Activated naive CD4-positive, alpha-beta T cell treated with anti-CD3 and anti-CD28 coated beads for 36 hours (primary cell): ENCODE measurements at regions of chr12 and their contacts with region 1.

Region 1: GRCh38 chr12:53180220-53180930 is at the starts of genes CSAD and ZNF740:
- DNase-seq: peak; percentile 98
- H3K4me3 Mint-ChIP-seq: peak within 1 kb of the TSS; percentile 87
- H3K27ac Mint-ChIP-seq: peak within 1 kb of the TSS; percentile 96
- H3K4me1 Mint-ChIP-seq: peaks cover 51% of the 10 kb centered on the region
- H3K27me3 Mint-ChIP-seq: no peaks in the 10 kb centered on the region
- total RNA-seq, gene CSAD: 31.5 to 32.3 TPM
- total RNA-seq, gene ZNF740: 40.4 to 42.0 TPM

Region 2: DNA sequence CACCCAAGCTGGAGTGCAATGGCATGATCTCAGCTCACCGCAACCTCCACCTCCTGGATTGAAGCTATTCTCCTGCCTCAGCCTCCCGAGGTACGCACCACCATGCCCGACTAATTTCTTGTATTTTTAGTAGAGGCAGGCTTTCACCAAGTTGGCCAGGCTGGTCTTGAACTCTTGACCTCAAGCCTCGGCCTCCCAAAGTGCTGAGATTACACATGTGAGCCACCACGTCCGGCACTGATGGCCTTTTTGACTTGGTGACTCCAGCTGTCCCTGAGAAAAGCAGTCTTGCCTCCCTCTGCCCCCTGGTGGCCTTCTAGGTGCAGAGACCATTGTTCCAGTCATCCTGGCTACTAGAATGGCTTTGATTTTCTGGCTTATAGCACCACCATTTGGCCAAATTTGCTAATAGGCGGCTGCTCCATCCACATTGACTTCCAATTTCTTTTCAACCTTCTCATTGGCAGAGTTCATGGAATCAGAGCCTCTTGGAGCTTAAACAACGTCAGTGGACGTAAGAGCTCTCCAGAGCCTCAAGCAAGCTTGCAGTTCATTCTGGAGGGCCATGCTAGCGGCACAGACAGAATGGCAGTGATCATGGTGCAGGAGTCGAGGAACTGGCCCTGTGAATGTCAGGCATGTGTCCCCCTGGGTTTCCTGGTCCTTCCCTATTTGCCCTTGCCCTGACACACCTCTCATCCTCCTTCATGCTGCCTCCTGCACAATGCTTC is 199.5 kb before region 1 on chr12:
- CTCF ChIA-PET with region 1: no interaction called
- intact Hi-C with region 1: no loop called
- DNase-seq: peak; percentile 92
- H3K4me3 Mint-ChIP-seq: no peak overlapping the region
- H3K27ac Mint-ChIP-seq: no peak overlapping the region
- H3K4me1 Mint-ChIP-seq: no peaks in the 10 kb centered on the region
- H3K27me3 Mint-ChIP-seq: peaks cover 11% of the 10 kb centered on the region

Region 3: DNA sequence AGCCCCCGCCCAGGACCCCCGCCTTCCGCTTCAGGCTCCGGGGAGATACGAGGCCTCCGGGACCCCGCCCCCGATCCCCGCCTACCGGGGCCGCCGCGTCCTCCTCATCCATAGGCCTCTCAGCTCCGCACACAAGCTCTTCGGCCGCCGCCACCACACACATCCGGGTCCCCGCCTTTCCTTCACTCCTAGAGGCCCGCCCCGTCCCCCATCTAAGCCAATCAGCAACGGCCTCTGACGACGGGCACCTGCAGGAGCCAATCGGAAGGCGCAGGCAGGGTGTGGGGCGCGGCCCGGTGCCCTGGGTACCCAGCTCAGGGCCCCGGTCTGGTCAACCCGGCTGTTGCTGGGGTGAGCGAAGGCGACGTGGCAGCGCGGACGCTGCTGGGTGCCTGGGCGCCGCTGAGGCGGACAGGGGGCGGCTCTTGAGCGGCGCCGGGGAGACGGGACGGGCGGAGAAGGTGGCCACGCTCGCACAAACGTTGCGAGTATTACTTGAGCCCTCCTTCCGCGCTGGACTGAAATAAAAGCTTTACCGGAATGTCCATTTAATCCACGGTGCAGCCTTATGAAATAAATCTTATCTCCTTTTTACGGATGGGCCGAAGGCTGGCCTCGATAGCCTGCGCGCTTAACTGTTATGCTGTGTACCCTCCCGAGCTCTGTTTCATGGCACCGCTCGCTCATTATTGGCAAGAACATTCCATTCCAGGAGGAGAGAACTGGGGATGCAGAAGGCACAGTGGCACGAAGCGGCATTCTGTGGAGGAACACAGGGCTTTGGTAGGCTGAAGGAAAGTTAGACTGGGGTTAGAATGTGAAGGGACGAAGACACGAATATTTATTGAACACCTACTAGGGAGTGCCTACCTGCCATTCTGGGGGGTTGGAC is 100.9 kb before region 1 on chr12 and contains the start of gene SPRYD3:
- CTCF ChIA-PET with region 1: no interaction called
- intact Hi-C with region 1: loop called (anchors 1 kb)
- DNase-seq: peak; percentile 98
- H3K4me3 Mint-ChIP-seq: peak within 1 kb of the TSS; percentile 88
- H3K27ac Mint-ChIP-seq: peak within 1 kb of the TSS; percentile 85
- H3K4me1 Mint-ChIP-seq: peaks cover 31% of the 10 kb centered on the region
- H3K27me3 Mint-ChIP-seq: no peaks in the 10 kb centered on the region
- total RNA-seq, gene SPRYD3: 20.1 to 20.2 TPM

Region 4: DNA sequence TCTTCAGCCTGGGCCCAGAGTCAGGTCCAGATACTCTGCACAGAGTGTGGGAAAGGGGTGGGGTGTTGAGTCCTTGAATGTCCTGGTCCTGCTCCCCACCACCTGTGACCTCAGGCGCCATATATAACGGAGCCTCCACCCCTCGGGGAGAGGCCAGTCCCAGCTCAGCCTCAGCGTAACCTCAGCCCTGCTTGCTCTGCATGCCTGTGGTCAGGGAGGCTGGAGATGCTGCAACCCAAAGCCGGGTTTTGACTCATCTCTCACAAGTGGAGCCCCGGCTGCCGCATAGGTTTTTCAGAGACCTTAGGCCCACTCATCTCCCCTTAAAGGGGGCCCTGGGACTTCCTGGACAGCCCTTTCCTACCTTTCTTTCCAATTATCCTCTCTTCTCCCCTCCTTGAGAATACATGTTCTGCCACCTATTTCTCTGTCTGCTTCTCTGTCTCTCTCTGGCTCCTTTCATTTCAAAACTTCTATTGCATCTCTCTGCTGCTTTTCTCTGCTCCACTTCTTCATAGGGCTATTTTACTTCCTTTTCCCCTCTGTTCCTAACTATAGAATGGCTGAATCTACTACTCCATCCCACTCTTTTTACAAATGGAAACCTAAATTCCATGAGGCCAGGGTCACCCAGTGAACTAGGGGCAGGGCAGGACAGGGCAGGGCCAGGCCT is 25.5 kb after region 1 on chr12:
- CTCF ChIA-PET with region 1: interaction called, 4 read pairs
- intact Hi-C with region 1: loop called (anchors 1 kb)
- DNase-seq: peak; percentile 88
- H3K4me3 Mint-ChIP-seq: peak overlapping the region; percentile 65
- H3K27ac Mint-ChIP-seq: peak overlapping the region; percentile 79
- H3K4me1 Mint-ChIP-seq: peaks cover 75% of the 10 kb centered on the region
- H3K27me3 Mint-ChIP-seq: no peaks in the 10 kb centered on the region

Region 5: GRCh38 chr12:53251477-53252348 is 71.3 kb after region 1 on chr12:
- CTCF ChIA-PET with region 1: interaction called, 3 read pairs
- intact Hi-C with region 1: loop called (anchors 1 kb)
- DNase-seq: peak; percentile 85
- H3K4me3 Mint-ChIP-seq: peak overlapping the region; percentile 97
- H3K27ac Mint-ChIP-seq: peak overlapping the region; percentile 87
- H3K4me1 Mint-ChIP-seq: peaks cover 40% of the 10 kb centered on the region
- H3K27me3 Mint-ChIP-seq: no peaks in the 10 kb centered on the region

Region 6: DNA sequence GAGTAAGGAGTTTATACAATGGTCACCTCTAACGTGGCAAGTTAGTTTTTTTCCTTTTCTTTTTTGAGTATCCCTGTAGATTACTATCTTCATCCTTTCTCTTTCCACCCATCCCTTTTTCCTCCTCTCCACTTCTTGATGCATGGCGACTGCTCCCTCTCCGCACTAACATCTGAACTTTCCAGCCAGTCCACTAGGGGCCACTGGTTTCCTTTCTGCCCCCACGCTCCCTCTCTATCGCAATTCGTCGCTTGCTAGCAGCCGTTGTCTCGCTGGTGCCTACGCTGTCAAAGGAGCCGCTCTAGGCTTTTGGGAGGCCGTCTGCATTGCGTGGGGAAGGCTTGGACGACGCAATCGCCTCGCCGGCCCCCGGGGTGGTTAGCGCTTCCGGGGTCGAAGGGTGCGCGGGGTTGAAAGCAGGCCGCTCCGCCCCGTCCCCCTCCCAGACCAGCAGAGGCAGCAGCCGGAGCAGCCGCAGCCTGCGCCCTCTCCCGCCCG is 271.3 kb after region 1 on chr12 and contains the start of gene PCBP2:
- CTCF ChIA-PET with region 1: no interaction called
- intact Hi-C with region 1: loop called (anchors 5 kb)
- DNase-seq: peak; percentile 99
- H3K4me3 Mint-ChIP-seq: peak within 1 kb of the TSS; percentile 99
- H3K27ac Mint-ChIP-seq: peak within 1 kb of the TSS; percentile 99
- H3K4me1 Mint-ChIP-seq: peaks cover 36% of the 10 kb centered on the region
- H3K27me3 Mint-ChIP-seq: no peaks in the 10 kb centered on the region
- total RNA-seq, gene PCBP2: 1,085 to 1,132 TPM